GM18951 (cell line): ENCODE measurements at regions of chr10 and their contacts with region 1.

Region 1: GRCh38 chr10:124530215-124530665 is 68.6 kb downstream of the LHPP start:
- POLR2A ChIP-seq: no peak

Region 2: DNA sequence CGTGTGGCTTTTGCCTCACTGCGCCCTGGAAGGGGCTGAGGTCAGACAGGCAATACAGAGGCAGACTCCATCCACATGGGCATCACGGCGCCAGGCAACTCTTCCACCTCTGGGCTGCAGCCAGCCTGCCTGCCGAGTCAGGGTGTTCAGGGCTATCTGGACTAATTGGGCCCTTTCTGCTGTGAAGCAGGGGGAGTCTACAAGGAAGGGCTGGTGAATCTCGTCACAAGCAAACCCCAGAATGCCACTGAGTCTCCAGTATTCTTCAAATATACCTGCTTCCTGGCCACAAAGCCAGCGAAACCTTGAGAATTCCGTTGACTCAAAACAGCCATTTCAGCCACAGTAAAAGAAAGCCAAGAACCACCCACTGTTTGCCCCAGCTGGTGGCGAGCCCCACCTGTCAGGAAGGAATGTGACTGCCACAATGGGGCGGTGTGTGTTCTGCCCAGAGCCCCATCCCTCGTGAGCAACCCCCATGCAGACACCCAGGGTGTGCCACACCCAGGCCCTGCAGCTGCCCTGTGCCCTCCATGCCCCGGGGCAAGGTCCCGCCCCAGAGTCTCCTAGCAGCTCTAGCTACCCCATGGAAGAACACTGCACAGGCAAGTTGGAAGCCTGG is 96.6 kb after region 1 on chr10:
- in situ Hi-C with region 1: no loop called
- POLR2A ChIP-seq: no peak

Region 3: DNA sequence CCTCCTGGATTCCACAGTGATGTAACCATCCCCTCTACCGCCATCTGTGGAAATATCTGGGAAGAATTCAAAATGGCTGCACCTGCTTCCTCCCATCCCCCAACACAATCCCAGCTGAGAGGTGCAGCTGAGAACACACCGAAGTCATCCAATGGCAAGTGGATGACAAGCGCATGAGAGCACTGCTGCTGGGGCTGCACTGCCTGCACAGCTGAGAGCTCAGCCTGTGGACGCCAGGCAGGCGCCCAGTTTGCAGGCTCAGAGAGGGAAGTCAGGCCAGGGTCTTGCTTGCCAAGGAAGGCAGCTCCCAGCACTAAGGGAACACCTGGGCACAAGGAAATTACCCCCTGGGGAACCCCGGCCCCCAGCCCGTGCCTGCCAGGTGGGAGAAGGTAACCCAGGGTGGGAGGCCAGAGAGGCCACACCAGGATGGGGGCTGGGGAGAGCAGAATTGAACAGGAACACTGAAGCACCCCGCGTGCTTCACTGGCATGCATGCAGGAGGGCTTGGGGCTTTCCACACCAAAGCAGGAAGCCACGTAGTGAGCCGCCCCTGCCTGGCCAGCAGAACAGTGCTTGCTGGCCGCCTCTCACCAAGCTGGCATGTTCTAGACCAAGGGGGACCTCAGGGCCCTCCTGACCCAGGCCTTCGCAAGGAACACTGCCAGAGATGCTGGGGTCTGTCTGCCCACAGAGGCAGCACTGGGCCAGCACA is 167.7 kb after region 1 on chr10:
- in situ Hi-C with region 1: no loop called
- POLR2A ChIP-seq: no peak

Region 4: GRCh38 chr10:124741281-124741921 is 211.2 kb after region 1 on chr10:
- in situ Hi-C with region 1: loop called (anchors 10 kb)
- POLR2A ChIP-seq: no peak

Region 5: GRCh38 chr10:124827474-124827873 is 297.2 kb after region 1 on chr10:
- in situ Hi-C with region 1: loop called (anchors 25 kb)
- POLR2A ChIP-seq: no peak